K562 (cell line): ENCODE measurements at regions of chr4 and their contacts with region 1.

Region 1: GRCh38 chr4:6673660-6674499 is 19.8 kb upstream of the S100P start:
- DNase-seq: peak; percentile 96 to 98 (median 97)
- ATAC-seq: peak; percentile 83
- H3K4me3 ChIP-seq: peak overlapping the region; percentile 95
- H3K27ac ChIP-seq: peak overlapping the region; percentile 99
- H3K4me1 ChIP-seq: peaks cover 29 to 33% of the 10 kb centered on the region in 2 experiments
- H3K27me3 ChIP-seq: no peaks in the 10 kb centered on the region
- CTCF ChIP-seq: peak in 1 of 3 experiments; percentile 21; a peak in 2 of 6 replicates
- EP300 ChIP-seq: no peak
- POLR2A ChIP-seq: peak; percentile 99
- RAD21 ChIP-seq: no peak

Region 2: DNA sequence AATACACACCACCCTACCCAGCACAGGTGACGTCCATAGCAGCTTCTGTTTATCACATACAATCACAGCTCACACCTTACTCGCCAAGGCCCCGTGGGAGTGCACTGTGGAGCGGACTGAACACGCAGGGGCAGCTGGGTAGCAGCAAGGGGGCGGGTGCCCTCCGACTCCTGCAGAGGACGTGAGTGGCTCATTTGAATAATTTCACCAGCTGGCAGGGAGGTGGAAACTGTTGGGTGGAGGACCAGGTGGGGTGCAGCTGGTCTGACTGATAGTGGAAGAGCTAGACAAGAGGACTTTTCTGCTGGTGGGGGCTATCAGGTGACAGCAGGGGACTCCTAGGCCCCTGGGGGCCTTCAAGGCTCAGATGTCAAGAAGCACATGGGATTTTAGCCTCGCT is 82.6 kb before region 1 on chr4:
- CTCF ChIA-PET with region 1: no interaction called
- POLR2A ChIA-PET with region 1: interaction called, 8 read pairs
- in situ Hi-C with region 1: no loop called
- intact Hi-C with region 1: loop called (anchors 5 kb)
- DNase-seq: peak; percentile 70 to 79 (median 73)
- ATAC-seq: peak; percentile 44
- H3K4me3 ChIP-seq: no peak overlapping the region
- H3K27ac ChIP-seq: no peak overlapping the region; the same call in 2 of the 3 replicates
- H3K4me1 ChIP-seq: peaks cover 9 to 35% of the 10 kb centered on the region in 2 experiments; a peak in 4 of 5 replicates
- H3K27me3 ChIP-seq: no peaks in the 10 kb centered on the region
- CTCF ChIP-seq: no peak
- EP300 ChIP-seq: peak; percentile 5; the same call in 1 of the 2 replicates
- POLR2A ChIP-seq: no peak
- RAD21 ChIP-seq: no peak

Region 3: GRCh38 chr4:6620891-6621555 is 52.9 kb before region 1 on chr4:
- CTCF ChIA-PET with region 1: no interaction called
- POLR2A ChIA-PET with region 1: no interaction called
- in situ Hi-C with region 1: no loop called
- intact Hi-C with region 1: no loop called
- DNase-seq: peak; percentile 24 to 52 (median 42)
- ATAC-seq: peak; percentile 81
- H3K4me3 ChIP-seq: no peak overlapping the region
- H3K27ac ChIP-seq: no peak overlapping the region
- H3K4me1 ChIP-seq: peaks cover 6 to 25% of the 10 kb centered on the region in 2 experiments
- H3K27me3 ChIP-seq: no peaks in the 10 kb centered on the region
- CTCF ChIP-seq: peak; percentile 33 to 59 (median 43); a peak in 5 of 6 replicates
- EP300 ChIP-seq: no peak
- POLR2A ChIP-seq: no peak
- RAD21 ChIP-seq: peak in 1 of 2 experiments; percentile 46; a peak in 2 of 4 replicates

Region 4: DNA sequence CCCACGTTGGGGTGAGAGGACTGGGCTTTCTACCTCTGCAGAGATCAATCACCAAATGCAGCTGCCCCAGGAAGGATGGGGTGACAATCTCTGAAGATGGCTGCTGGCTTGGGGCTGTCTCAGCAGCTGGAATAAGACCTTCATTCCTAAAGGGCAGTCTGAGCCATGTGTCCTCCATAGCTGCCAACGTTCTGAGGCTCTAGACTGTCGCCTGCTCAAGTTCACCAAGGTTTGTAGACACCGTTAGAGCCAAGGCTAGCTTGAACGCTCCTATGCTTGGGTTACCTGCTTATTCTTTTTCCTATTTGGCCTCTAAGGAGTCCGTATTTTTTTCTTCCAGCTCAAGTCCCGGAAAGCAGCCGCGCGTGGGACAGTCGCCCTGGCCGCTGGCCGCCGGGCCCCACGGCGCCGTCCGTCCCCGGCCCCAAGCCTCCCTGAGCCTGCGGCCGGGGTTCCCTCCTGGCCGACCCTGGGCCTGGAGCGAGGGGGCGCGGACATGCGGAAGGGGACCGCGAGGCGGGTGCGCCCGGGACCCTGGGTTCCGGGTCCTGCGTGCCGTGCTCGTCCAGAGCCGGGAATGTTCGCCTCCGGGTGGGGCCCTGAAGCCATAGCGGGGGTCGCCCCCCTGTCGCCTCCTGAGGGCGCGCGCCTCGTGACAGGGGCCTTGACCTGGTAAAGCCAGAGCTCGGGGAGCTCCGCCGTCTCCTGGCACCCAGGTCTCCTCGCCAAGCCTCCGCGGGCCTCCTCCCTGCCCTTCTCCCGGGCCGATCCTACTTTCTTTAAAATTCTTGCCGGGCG is 10.1 kb before region 1 on chr4:
- CTCF ChIA-PET with region 1: no interaction called
- POLR2A ChIA-PET with region 1: interaction called, 40 read pairs
- in situ Hi-C with region 1: no loop called
- intact Hi-C with region 1: no loop called
- DNase-seq: no peak
- ATAC-seq: no peak
- H3K4me3 ChIP-seq: no peak overlapping the region
- H3K27ac ChIP-seq: no peak overlapping the region
- H3K4me1 ChIP-seq: peaks cover 0 to 15% of the 10 kb centered on the region in 2 experiments; a peak in 3 of 5 replicates
- H3K27me3 ChIP-seq: 0 out of 5 replicates have a peak, but pooled peaks cover 3 to 5% of the 10 kb centered on the region in 2 experiments
- CTCF ChIP-seq: no peak
- EP300 ChIP-seq: no peak
- POLR2A ChIP-seq: no peak
- RAD21 ChIP-seq: no peak

Region 5: DNA sequence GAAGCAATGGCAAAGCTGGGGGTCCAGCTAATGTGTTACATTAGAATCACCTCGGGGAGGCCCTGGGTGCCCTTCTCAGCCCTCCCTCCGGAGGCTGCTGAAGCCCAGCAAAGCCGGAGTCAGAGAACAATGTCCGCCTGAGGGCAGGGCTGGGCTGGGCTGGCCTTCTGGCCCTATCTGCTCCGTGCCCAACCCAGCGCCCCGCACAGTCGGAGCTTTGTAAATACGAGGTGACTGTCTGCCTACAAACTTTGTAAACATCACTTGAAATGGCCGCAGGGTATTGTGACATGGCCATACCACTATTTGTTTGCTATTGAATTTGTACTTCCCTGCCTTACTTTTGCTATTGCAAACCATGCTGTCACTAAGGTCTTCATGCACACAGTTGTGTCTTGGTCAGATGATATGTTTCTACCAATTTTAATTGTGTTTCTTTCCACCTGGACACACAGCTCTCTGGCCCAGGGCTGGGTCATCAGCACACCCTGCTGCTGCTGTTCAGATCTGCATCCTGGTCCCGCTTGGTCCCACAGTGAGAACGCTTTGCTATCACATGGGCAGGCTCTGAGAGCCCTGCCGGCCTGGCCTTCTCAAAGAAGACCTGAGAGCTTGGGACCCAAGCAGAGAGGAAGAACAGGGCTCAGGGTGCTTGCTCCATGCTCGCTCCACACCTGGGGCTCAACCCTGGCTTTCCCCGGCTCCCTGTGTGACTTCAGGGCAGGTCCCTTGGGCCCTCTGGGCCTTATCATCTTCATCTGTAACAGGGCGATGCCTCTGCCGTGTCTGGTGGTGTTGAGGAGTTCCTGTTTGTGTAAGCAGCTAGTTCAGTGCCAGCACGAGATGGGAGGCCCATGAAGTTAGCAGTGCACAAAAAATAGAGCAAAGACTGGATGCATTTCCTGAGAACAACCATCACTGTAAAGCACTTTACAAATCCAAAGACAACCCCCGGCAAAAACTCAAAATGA is 22.1 kb after region 1 on chr4:
- CTCF ChIA-PET with region 1: no interaction called
- POLR2A ChIA-PET with region 1: interaction called, 38 read pairs
- in situ Hi-C with region 1: no loop called
- intact Hi-C with region 1: no loop called
- DNase-seq: no peak
- ATAC-seq: peak; percentile 62
- H3K4me3 ChIP-seq: no peak overlapping the region
- H3K27ac ChIP-seq: peak overlapping the region; percentile 2; the same call in 2 of the 3 replicates
- H3K4me1 ChIP-seq: peaks cover 40 to 49% of the 10 kb centered on the region in 2 experiments
- H3K27me3 ChIP-seq: no peaks in the 10 kb centered on the region
- CTCF ChIP-seq: peak; percentile 34 to 42 (median 40); a peak in 4 of 6 replicates
- EP300 ChIP-seq: no peak
- POLR2A ChIP-seq: no peak
- RAD21 ChIP-seq: peak; percentile 12 to 46; a peak in 2 of 4 replicates

Region 6: DNA sequence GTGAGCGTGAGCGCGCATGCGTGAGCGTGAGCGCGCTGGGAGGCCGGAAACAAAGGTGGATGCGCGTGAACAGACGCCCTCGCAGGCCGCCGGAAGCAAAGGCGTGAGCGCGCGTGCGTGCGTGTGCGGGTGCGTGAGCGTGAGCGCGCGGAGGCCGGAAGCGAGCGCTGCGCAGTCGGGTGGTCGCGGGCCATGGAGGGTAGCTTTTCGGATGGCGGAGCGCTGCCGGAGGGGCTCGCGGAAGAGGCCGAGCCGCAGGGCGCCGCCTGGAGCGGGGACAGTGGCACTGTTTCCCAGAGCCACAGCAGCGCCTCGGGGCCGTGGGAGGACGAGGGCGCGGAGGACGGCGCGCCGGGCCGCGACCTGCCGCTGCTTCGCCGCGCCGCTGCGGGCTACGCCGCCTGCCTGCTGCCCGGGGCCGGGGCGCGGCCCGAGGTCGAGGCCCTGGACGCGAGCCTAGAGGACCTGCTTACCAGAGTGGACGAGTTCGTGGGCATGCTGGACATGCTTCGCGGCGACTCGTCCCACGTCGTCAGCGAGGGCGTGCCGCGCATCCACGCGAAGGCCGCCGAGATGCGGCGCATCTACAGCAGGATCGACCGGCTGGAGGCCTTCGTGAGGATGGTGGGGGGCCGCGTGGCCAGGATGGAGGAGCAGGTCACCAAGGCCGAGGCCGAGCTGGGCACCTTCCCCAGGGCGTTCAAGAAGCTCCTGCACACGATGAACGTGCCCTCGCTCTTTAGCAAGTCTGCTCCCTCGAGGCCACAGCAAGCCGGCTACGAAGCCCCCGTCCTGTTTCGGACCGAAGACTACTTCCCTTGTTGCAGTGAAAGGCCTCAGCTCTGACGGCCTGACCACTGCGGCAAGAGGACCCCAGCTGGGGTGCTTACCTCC is 42.4 kb after region 1 on chr4 and contains the start of gene BLOC1S4:
- CTCF ChIA-PET with region 1: interaction called, 3 read pairs
- POLR2A ChIA-PET with region 1: interaction called, 4 read pairs
- in situ Hi-C with region 1: no loop called
- intact Hi-C with region 1: loop called (anchors 2 kb)
- DNase-seq: peak; percentile 94 to 96 (median 95)
- ATAC-seq: peak; percentile 78
- H3K4me3 ChIP-seq: peak within 1 kb of the TSS; percentile 58
- H3K27ac ChIP-seq: peak within 1 kb of the TSS; percentile 94
- H3K4me1 ChIP-seq: peaks cover 22 to 23% of the 10 kb centered on the region in 2 experiments; a peak in 4 of 5 replicates
- H3K27me3 ChIP-seq: no peaks in the 10 kb centered on the region
- CTCF ChIP-seq: peak in 2 of 3 experiments; percentile 14 to 26; a peak in 2 of 6 replicates
- EP300 ChIP-seq: no peak
- POLR2A ChIP-seq: peak; percentile 81
- RAD21 ChIP-seq: 0 out of 4 replicates have a peak, but pooled peaks of 1 of the 2 experiments have one; percentile 13
- polyA plus RNA-seq, gene BLOC1S4: 3.1 to 3.9 TPM